ENCODE measurements at regions of chr5 and their contacts with region 1.

Region 1: GRCh38 chr5:154179846-154180710 is 10.5 kb upstream of the GALNT10 start:
- DNase-seq: no peak
- ATAC-seq: peak; percentile 99
- H3K4me3 ChIP-seq: no peak overlapping the region
- H3K27ac ChIP-seq: no peak overlapping the region
- H3K4me1 ChIP-seq: no peaks in the 10 kb centered on the region
- H3K27me3 ChIP-seq: no peaks in the 10 kb centered on the region
- CTCF ChIP-seq: peak; percentile 74 to 84 (median 80)
- EP300 ChIP-seq: no peak
- POLR2A ChIP-seq: no peak
- RAD21 ChIP-seq: peak; percentile 89

Region 2: DNA sequence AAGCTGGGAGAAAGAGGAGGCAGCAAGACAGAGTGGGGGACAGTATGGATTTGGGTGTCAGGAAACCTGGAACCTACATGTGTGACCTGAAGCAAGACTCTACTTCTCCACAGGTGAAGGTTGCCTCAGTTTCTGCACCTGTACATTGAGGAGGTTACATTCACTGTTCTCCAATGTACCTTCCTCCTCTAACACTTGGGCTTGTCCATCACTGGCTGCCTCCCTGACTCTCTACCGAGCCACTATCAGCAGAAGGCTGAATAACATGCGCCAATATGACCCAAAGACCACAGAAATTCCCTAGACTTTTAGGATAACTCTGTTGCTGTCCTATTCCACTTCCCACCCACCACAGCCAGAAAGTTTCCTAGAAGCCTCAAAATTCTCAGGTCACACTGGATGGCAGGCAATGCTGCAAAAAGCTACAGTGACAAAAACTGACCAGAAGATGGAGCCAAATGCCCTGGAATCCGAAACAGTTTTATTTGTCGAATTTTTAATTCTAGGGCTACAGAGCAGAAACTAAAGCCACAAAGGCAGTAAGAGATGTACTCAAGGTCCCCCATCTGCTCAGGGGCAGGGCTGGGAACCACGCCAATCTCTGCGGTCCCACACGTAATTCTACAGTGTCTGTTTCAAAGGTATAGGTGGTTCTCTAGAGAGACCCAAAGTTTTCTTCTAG is 205.8 kb before region 1 on chr5:
- CTCF ChIA-PET with region 1: interaction called, 19 read pairs
- POLR2A ChIA-PET with region 1: no interaction called
- RAD21 ChIA-PET with region 1: interaction called, 3 read pairs
- SMC1A ChIA-PET with region 1: interaction called, 19 read pairs
- in situ Hi-C with region 1: no loop called
- intact Hi-C with region 1: loop called (anchors 1 kb)
- DNase-seq: no peak
- ATAC-seq: peak; percentile 83
- H3K4me3 ChIP-seq: no peak overlapping the region
- H3K27ac ChIP-seq: no peak overlapping the region
- H3K4me1 ChIP-seq: no peaks in the 10 kb centered on the region
- H3K27me3 ChIP-seq: peaks cover 2% of the 10 kb centered on the region in 2 experiments; a peak in 2 of 4 replicates
- CTCF ChIP-seq: peak; percentile 58 to 79 (median 75); a peak in 5 of 6 replicates
- EP300 ChIP-seq: no peak
- POLR2A ChIP-seq: no peak
- RAD21 ChIP-seq: peak; percentile 90

Region 3: GRCh38 chr5:154058055-154059038 is 121.7 kb before region 1 on chr5:
- CTCF ChIA-PET with region 1: interaction called, 11 read pairs
- POLR2A ChIA-PET with region 1: interaction called, 3 read pairs
- RAD21 ChIA-PET with region 1: no interaction called
- SMC1A ChIA-PET with region 1: no interaction called
- in situ Hi-C with region 1: loop called (anchors 10 kb)
- intact Hi-C with region 1: no loop called
- DNase-seq: peak; percentile 63
- ATAC-seq: peak; percentile 88
- H3K4me3 ChIP-seq: no peak overlapping the region
- H3K27ac ChIP-seq: peak overlapping the region; percentile 52
- H3K4me1 ChIP-seq: peaks cover 23% of the 10 kb centered on the region
- H3K27me3 ChIP-seq: no peaks in the 10 kb centered on the region
- CTCF ChIP-seq: no peak
- EP300 ChIP-seq: no peak
- POLR2A ChIP-seq: no peak
- RAD21 ChIP-seq: no peak

Region 4: GRCh38 chr5:154228696-154229095 is 48.6 kb after region 1 on chr5:
- CTCF ChIA-PET with region 1: interaction called, 10 read pairs
- POLR2A ChIA-PET with region 1: no interaction called
- RAD21 ChIA-PET with region 1: interaction called, 3 read pairs
- SMC1A ChIA-PET with region 1: interaction called, 4 read pairs
- in situ Hi-C with region 1: no loop called
- intact Hi-C with region 1: no loop called
- DNase-seq: peak; percentile 72
- ATAC-seq: peak; percentile 98
- H3K4me3 ChIP-seq: peak overlapping the region; percentile 50; the same call in 1 of the 2 replicates
- H3K27ac ChIP-seq: peak overlapping the region; percentile 75
- H3K4me1 ChIP-seq: peaks cover 23% of the 10 kb centered on the region
- H3K27me3 ChIP-seq: no peaks in the 10 kb centered on the region
- CTCF ChIP-seq: no peak
- EP300 ChIP-seq: peak; percentile 22 to 62; a peak in 2 of 4 replicates
- POLR2A ChIP-seq: no peak
- RAD21 ChIP-seq: no peak

Region 5: GRCh38 chr5:154575546-154576428 is 395.7 kb after region 1 on chr5:
- CTCF ChIA-PET with region 1: no interaction called
- POLR2A ChIA-PET with region 1: no interaction called
- RAD21 ChIA-PET with region 1: no interaction called
- SMC1A ChIA-PET with region 1: no interaction called
- in situ Hi-C with region 1: no loop called
- intact Hi-C with region 1: no loop called
- DNase-seq: peak; percentile 66
- ATAC-seq: peak; percentile 97
- H3K4me3 ChIP-seq: no peak overlapping the region
- H3K27ac ChIP-seq: no peak overlapping the region
- H3K4me1 ChIP-seq: peaks cover 16% of the 10 kb centered on the region
- H3K27me3 ChIP-seq: no peaks in the 10 kb centered on the region
- CTCF ChIP-seq: peak; percentile 60 to 67 (median 64)
- EP300 ChIP-seq: no peak
- POLR2A ChIP-seq: no peak
- RAD21 ChIP-seq: peak; percentile 74

Measured in GM12878 (cell line).